Heart right ventricle (tissue), 16 donors: ENCODE measurements at regions of chr7 and their contacts with region 1.

Region 1: GRCh38 chr7:88746158-88746557 is 13.3 kb upstream of the ZNF804B start:
- DNase-seq: no peak
- ATAC-seq: no peak
- H3K4me3 ChIP-seq: no peak overlapping the region
- H3K27ac ChIP-seq: no peak overlapping the region
- H3K4me1 ChIP-seq: no peaks in the 10 kb centered on the region
- H3K27me3 ChIP-seq: no peaks in the 10 kb centered on the region
- CTCF ChIP-seq: no peak

Region 2: GRCh38 chr7:88507970-88508369 is 238.2 kb before region 1 on chr7:
- intact Hi-C with region 1: no loop called
- DNase-seq: no peak
- ATAC-seq: no peak
- H3K4me3 ChIP-seq: no peak overlapping the region
- H3K27ac ChIP-seq: no peak overlapping the region
- H3K4me1 ChIP-seq: no peaks in the 10 kb centered on the region
- H3K27me3 ChIP-seq: no peaks in the 10 kb centered on the region
- CTCF ChIP-seq: no peak

Region 3: GRCh38 chr7:88628363-88629085 is 117.6 kb before region 1 on chr7:
- intact Hi-C with region 1: no loop called
- DNase-seq: no peak
- ATAC-seq: no peak
- H3K4me3 ChIP-seq: no peak overlapping the region
- H3K27ac ChIP-seq: no peak overlapping the region
- H3K4me1 ChIP-seq: no peaks in the 10 kb centered on the region
- H3K27me3 ChIP-seq: no peaks in the 10 kb centered on the region
- CTCF ChIP-seq: no peak

Region 4: DNA sequence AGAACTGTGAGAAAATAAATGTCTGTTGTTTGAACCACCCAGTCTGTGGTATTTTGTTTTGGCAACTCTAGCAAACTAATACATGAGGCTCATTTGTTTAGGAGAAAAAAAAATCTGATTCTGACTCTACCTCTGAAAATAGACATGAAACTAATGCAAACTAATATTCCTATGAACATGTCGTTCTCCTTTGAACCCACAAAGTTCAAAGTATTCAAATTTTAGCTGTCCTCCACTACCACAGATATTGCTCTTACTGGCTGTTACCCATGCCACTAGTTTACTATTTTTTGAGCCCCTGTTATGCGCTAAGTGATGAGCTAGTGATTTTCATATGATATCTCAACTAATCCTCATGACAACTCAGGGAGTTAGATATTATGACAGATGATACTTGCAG is 45.4 kb before region 1 on chr7:
- intact Hi-C with region 1: loop called in 1 of 10 experiments (anchors 1 kb)
- DNase-seq: no peak
- ATAC-seq: no peak
- H3K4me3 ChIP-seq: no peak overlapping the region
- H3K27ac ChIP-seq: no peak overlapping the region
- H3K4me1 ChIP-seq: no peaks in the 10 kb centered on the region
- H3K27me3 ChIP-seq: no peaks in the 10 kb centered on the region
- CTCF ChIP-seq: no peak